ENCODE measurements at regions of chr1 and their contacts with region 1.

Region 1: GRCh38 chr1:23585447-23586015 is 26.2 kb upstream of the ID3 start:
- DNase-seq: peak; percentile 84
- H3K4me3 ChIP-seq: no peak overlapping the region
- H3K27ac ChIP-seq: peak overlapping the region; percentile 95
- H3K27me3 ChIP-seq: no peaks in the 10 kb centered on the region
- CTCF ChIP-seq: no peak

Region 2: DNA sequence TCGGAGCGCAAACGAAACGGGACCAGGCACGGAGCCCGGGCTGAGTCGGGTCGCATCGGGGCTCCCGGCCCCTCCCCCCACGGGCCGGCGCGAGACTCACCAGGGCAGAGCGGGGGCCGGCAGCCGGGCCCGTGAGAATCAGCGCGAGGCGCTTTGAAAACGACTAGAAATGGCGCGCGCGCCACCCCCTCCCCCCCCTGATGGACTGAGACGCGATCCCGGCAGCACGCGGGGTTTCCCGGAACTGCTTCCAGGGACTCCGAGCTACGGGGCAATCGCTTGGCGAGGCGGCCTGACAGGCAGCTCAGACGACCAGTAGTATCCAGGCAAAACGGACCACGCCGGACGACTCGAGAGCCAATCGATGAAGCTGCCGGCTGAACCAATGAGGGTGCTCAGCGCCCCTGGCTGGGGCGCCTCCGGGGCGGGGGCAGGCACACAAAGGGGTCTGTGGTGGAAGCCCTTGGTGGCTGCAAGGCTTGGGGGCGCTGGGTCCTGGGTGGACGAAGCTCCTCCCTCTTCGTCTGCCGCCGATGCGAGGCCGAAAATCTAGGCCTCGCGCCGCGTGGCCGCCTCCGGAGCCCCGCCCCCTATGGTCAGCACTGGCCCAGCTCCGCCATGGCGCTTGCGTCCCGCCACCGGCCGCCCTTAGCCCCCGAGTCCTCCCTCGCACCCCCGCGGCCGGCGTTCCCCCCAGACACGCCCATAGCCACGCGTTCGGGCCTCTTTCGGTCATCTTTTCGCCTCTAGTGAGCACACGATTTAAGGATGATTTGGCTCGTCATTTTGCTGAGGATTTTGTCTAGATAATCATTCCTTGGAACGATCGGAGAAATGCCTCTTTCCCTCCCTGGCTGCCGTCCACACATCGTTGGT is 241.2 kb before region 1 on chr1 and contains the start of gene HNRNPR:
- CTCF ChIA-PET with region 1: no interaction called
- POLR2A ChIA-PET with region 1: no interaction called
- DNase-seq: peak; percentile 100
- H3K4me3 ChIP-seq: peak within 1 kb of the TSS; percentile 83
- H3K27ac ChIP-seq: peak within 1 kb of the TSS; percentile 86
- H3K27me3 ChIP-seq: no peaks in the 10 kb centered on the region
- CTCF ChIP-seq: no peak
- polyA plus RNA-seq, gene HNRNPR: 134 and 171 TPM in 2 replicates

Region 3: GRCh38 chr1:23627069-23627735 is 41.7 kb after region 1 on chr1:
- CTCF ChIA-PET with region 1: no interaction called
- POLR2A ChIA-PET with region 1: interaction called, 12 read pairs
- DNase-seq: no peak
- H3K4me3 ChIP-seq: no peak overlapping the region
- H3K27ac ChIP-seq: no peak overlapping the region
- H3K27me3 ChIP-seq: no peaks in the 10 kb centered on the region
- CTCF ChIP-seq: no peak

Measured in AG04450 (cell line).